Gastrocnemius medialis (tissue), 4 donors: ENCODE measurements at regions of chr13 and their contacts with region 1.

Region 1: DNA sequence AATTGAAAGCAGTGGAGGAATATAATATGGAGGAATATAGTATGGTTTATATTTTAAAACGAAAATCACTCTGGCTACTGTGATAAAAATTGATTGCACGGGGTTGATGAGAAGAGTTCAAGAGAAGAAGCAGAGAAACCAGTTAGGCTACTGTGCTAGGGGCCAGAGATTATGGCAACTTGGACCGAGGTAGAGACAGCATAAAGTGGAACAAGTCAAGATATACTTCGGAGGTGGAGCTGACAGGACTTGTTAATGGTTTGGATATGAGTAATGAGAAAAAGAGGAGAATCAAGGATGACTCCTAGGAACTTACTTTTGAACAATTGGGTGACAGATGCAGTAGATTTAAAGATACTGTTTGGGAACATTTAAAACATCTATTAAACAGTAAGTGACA is 6.6 kb upstream of the WDFY2 start:
- DNase-seq: no peak
- ATAC-seq: no peak
- H3K4me3 ChIP-seq: no peak overlapping the region
- H3K27ac ChIP-seq: no peak overlapping the region
- H3K4me1 ChIP-seq: no peaks in the 10 kb centered on the region
- H3K27me3 ChIP-seq: no peaks in the 10 kb centered on the region
- CTCF ChIP-seq: no peak
- POLR2A ChIP-seq: no peak

Region 2: DNA sequence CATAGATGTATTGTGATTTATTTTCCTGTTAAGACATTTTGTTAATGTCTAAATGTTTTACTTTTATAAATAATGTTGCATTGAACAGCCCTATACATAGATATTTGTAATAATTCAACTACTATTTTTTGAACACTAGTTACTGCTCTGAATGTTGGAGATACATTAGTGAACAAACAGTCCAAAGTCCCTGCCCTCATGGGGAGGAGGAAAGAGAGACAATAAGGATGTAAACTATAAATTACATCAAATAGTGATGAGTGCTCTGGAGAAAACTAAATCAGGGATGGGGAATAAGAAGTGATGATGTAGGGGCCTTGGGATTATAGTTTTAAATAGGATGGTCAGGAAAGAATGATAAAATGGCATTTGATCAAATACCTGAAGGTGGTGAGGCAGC is 112.6 kb before region 1 on chr13:
- in situ Hi-C with region 1: loop called in 1 of 4 experiments (anchors 10 kb)
- intact Hi-C with region 1: no loop called
- DNase-seq: no peak
- ATAC-seq: no peak
- H3K4me3 ChIP-seq: no peak overlapping the region
- H3K27ac ChIP-seq: no peak overlapping the region
- H3K4me1 ChIP-seq: no peaks in the 10 kb centered on the region
- H3K27me3 ChIP-seq: no peaks in the 10 kb centered on the region
- CTCF ChIP-seq: no peak
- POLR2A ChIP-seq: no peak

Region 3: GRCh38 chr13:51599444-51600176 is 21.9 kb after region 1 on chr13:
- in situ Hi-C with region 1: no loop called
- intact Hi-C with region 1: no loop called
- DNase-seq: no peak
- ATAC-seq: no peak
- H3K4me3 ChIP-seq: no peak overlapping the region
- H3K27ac ChIP-seq: no peak overlapping the region
- H3K4me1 ChIP-seq: no peaks in the 10 kb centered on the region
- H3K27me3 ChIP-seq: no peaks in the 10 kb centered on the region
- CTCF ChIP-seq: no peak
- POLR2A ChIP-seq: no peak

Region 4: GRCh38 chr13:51729866-51730546 is 152.3 kb after region 1 on chr13:
- in situ Hi-C with region 1: no loop called
- intact Hi-C with region 1: no loop called
- DNase-seq: peak in 1 of 2 donors; percentile 41
- ATAC-seq: peak; percentile 68 to 71
- H3K4me3 ChIP-seq: no peak overlapping the region
- H3K27ac ChIP-seq: peak overlapping the region; percentile 53 to 69 (median 65)
- H3K4me1 ChIP-seq: peaks cover 0 to 8% of the 10 kb centered on the region in 2 donors
- H3K27me3 ChIP-seq: no peaks in the 10 kb centered on the region
- CTCF ChIP-seq: no peak
- POLR2A ChIP-seq: no peak